ENCODE measurements at regions of chr1 and their contacts with region 1.

Region 1: DNA sequence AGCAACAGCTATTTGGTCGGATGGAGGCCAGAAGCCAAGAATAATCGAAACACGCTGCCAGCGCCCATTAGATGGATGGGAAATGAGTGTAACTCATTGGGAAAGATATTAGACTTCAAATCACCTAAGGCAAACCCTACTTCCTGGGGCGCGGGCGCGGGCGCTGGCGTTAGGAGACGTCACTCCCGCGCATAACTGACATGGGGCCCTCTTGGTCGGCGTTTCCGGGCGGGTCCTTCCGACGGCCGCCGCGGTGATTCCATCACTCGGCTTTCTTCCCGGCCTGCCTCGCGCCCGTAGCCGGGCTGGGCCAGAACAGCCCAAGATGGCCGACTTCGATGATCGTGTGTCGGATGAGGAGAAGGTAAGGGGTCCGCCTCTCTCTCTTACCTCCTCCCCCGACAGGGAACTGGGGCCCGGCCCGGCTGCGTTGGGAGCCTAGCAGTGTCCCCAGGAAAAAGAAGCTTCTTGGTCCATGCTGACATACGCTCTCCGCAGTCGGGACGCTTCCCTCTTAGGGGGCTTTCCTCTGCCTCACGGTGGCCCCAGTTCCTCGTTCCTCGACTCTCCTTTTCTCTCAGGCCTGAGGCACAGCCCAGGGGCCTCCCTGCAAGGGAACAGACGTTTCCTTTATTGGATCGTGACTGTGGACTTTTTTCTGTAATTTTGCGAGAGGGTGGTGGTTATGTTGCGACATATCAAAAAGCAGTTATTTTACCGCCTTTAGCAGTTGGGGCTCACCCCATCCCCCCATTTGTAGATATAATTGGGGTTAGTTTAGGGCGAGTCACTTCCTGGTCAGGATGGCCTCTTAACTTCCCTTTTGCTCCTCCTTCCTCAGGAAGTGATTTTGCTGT is at the start of gene CAPZA1:
- DNase-seq: peak; percentile 74 to 95 (median 91)
- ATAC-seq: peak; percentile 80 to 88 (median 88)
- H3K4me3 ChIP-seq: peak within 1 kb of the TSS; percentile 88 to 97
- H3K4me3 Mint-ChIP-seq: peak within 1 kb of the TSS; percentile 97 to 100 (median 97)
- H3K27ac ChIP-seq: peak within 1 kb of the TSS; percentile 100
- H3K27ac Mint-ChIP-seq: peak within 1 kb of the TSS; percentile 98 to 100
- H3K4me1 ChIP-seq: peaks cover 30 to 36% of the 10 kb centered on the region in 2 experiments
- H3K4me1 Mint-ChIP-seq: peaks cover 43 to 55% (median 50%) of the 10 kb centered on the region in 3 donors
- H3K27me3 ChIP-seq: no peaks in the 10 kb centered on the region
- H3K27me3 Mint-ChIP-seq: no peaks in the 10 kb centered on the region
- total RNA-seq, gene CAPZA1: 115 to 189 (median 138) TPM

Region 2: DNA sequence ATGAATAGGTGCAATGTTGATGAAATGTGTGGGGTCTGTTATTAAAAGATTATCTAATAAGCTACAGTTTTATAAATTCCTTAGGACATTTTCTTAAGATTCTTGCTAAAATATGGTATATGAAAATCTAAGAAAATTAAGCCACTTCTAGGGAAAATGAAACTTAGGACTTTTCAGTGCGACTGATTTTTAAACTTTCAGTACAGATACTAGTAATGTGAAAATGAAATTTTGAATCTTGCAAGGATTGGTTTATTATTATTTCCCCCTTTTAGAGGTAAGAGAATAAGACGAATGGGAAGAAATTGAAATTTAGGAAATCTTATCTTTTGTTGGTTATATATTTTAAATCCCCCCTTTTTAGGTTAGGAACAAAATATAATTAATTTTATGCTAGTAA is 16.3 kb after region 1 on chr1:
- CTCF ChIA-PET with region 1: interaction called in 1 of 2 experiments, 3 read pairs
- POLR2A ChIA-PET with region 1: interaction called, 7 to 11 read pairs
- DNase-seq: no peak
- ATAC-seq: no peak
- H3K4me3 ChIP-seq: no peak overlapping the region
- H3K4me3 Mint-ChIP-seq: peak overlapping the region in 2 of 3 donors; percentile 41 to 45
- H3K27ac ChIP-seq: peak overlapping the region; percentile 31
- H3K27ac Mint-ChIP-seq: peak overlapping the region; percentile 74 to 82
- H3K4me1 ChIP-seq: peaks cover 7 to 18% of the 10 kb centered on the region in 2 experiments
- H3K4me1 Mint-ChIP-seq: peaks cover 69 to 73% (median 71%) of the 10 kb centered on the region in 3 donors
- H3K27me3 ChIP-seq: no peaks in the 10 kb centered on the region
- H3K27me3 Mint-ChIP-seq: no peaks in the 10 kb centered on the region

Region 3: GRCh38 chr1:112754116-112754628 is 134.4 kb after region 1 on chr1:
- CTCF ChIA-PET with region 1: no interaction called
- POLR2A ChIA-PET with region 1: no interaction called
- DNase-seq: no peak
- ATAC-seq: no peak
- H3K4me3 ChIP-seq: no peak overlapping the region
- H3K4me3 Mint-ChIP-seq: no peak overlapping the region
- H3K27ac ChIP-seq: no peak overlapping the region
- H3K27ac Mint-ChIP-seq: no peak overlapping the region
- H3K4me1 ChIP-seq: no peaks in the 10 kb centered on the region
- H3K4me1 Mint-ChIP-seq: no peaks in the 10 kb centered on the region
- H3K27me3 ChIP-seq: peaks cover 0 to 41% of the 10 kb centered on the region in 2 experiments
- H3K27me3 Mint-ChIP-seq: peaks cover 35 to 52% of the 10 kb centered on the region in 2 donors

Region 4: GRCh38 chr1:112866151-112866550 is 246.4 kb after region 1 on chr1:
- CTCF ChIA-PET with region 1: no interaction called
- POLR2A ChIA-PET with region 1: no interaction called
- DNase-seq: no peak
- ATAC-seq: no peak
- H3K4me3 ChIP-seq: no peak overlapping the region
- H3K4me3 Mint-ChIP-seq: no peak overlapping the region
- H3K27ac ChIP-seq: no peak overlapping the region
- H3K27ac Mint-ChIP-seq: no peak overlapping the region
- H3K4me1 ChIP-seq: no peaks in the 10 kb centered on the region
- H3K4me1 Mint-ChIP-seq: peaks cover 0 to 5% (median 5%) of the 10 kb centered on the region in 3 donors
- H3K27me3 ChIP-seq: no peaks in the 10 kb centered on the region
- H3K27me3 Mint-ChIP-seq: peaks cover 0 to 3% of the 10 kb centered on the region in 2 donors